Gastrocnemius medialis (tissue), 4 donors: ENCODE measurements at regions of chr3 and their contacts with region 1.

Region 1: GRCh38 chr3:128123538-128124368 is at the start of gene RUVBL1:
- DNase-seq: peak; percentile 95 to 97
- ATAC-seq: peak; percentile 99 to 100
- H3K4me3 ChIP-seq: peak within 1 kb of the TSS; percentile 87 to 99 (median 93)
- H3K27ac ChIP-seq: peak within 1 kb of the TSS; percentile 67 to 83 (median 76)
- H3K4me1 ChIP-seq: peaks cover 11 to 14% of the 10 kb centered on the region in 2 donors
- H3K27me3 ChIP-seq: no peaks in the 10 kb centered on the region
- CTCF ChIP-seq: no peak
- POLR2A ChIP-seq: peak; percentile 39 to 48
- total RNA-seq, gene RUVBL1: 12.1 to 26.3 (median 21.4) TPM

Region 2: DNA sequence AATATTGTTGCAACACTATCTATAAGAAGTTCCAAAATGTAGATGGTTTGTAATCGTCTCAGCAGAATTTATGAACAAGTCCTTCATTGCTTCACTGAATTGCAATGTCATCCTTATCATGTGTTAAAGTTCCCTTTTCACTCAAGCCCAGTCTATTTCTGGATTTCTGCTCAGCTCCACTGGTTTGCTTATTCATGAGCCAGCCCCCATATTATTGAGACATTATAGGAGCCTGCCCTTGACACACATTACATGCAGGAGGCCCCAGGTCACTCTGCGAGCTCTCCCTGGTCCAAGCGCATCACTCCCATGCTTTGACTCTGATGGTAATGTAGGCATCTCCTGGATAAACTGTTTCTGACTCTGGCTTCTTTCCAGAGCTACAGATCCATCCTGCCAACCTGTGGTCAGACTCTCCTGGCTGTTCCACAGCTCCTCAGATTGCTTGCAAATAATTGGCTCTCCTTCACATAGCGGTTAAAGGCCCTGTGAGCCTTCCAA is 394.1 kb before region 1 on chr3:
- in situ Hi-C with region 1: no loop called
- intact Hi-C with region 1: no loop called
- DNase-seq: no peak
- ATAC-seq: peak; percentile 74 to 77
- H3K4me3 ChIP-seq: no peak overlapping the region
- H3K27ac ChIP-seq: peak overlapping the region in 3 of 4 donors; percentile 52 to 78 (median 61)
- H3K4me1 ChIP-seq: peaks cover 13 to 47% of the 10 kb centered on the region in 2 donors
- H3K27me3 ChIP-seq: no peaks in the 10 kb centered on the region
- CTCF ChIP-seq: no peak
- POLR2A ChIP-seq: no peak

Region 3: DNA sequence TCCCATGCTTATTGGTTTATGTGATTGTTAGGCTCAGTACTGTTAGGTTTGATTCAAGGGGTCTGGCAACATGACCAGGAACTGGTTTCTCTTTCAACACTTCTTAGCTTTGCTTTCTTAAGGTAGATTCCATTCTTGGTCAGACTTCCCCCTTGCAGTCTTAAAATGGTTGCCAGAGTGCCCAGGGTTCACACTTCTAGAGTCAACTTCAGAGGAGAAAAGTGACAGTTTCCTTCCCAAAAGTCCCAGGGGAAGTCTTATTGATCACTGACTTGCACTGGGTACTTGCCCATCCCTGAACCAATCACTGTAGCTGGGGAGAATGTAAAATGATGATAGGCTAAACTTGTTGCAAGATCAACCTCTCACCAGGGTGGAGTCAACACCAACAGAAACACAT is 315.6 kb before region 1 on chr3:
- in situ Hi-C with region 1: no loop called
- intact Hi-C with region 1: no loop called
- DNase-seq: no peak
- ATAC-seq: no peak
- H3K4me3 ChIP-seq: no peak overlapping the region
- H3K27ac ChIP-seq: no peak overlapping the region
- H3K4me1 ChIP-seq: peaks cover 36 to 37% of the 10 kb centered on the region in 2 donors
- H3K27me3 ChIP-seq: no peaks in the 10 kb centered on the region
- CTCF ChIP-seq: no peak
- POLR2A ChIP-seq: no peak

Region 4: DNA sequence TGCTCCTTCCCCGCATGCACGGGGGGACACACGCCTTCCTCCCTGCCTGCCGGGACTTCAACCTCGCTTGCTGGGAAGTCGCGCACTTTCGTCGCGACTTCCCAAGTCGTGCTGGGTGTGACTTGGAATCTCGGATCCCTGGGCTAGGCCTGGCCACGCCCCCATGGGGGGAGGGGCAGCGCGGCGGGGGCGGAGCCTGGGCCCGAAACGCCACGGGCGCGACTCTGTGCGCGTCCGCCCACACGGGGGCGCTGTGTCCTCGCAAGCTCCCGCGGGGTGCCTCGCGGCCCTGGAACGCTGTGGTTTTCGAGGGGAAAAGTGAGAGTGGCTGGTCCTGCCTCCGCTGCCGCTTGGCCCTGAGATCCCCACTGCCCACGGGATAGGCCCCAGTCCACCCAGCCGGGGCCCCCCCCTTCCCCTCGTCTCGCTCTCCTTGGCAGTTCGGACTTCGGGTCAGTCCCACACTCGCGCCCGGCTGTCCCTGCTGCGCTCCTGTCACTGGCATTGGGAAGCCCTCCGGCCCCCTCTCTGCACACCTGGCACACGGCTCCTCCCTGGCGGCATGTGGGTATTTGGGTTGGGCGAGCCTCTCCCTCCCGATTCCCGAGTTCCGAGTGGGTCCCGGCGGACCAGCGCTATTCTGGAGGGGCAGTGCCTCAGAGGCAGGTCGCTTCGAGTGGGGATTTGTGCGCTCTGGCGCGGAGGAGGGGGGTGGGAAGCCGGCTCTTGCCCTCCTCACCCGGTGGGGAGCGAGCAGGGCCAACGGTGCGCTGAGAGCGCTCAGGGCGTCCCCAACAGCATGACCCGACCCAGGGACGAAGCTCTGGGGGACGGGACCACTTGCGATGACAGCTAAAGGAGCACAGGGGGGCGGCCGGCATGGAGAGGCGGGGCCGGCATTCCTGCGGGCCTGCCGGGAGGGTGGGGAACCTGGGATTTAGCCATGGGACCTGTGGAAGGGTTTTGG is 48.0 kb before region 1 on chr3:
- in situ Hi-C with region 1: no loop called
- intact Hi-C with region 1: loop called (anchors 5 kb)
- DNase-seq: peak; percentile 61 to 75
- ATAC-seq: peak; percentile 80 to 86
- H3K4me3 ChIP-seq: peak overlapping the region; percentile 58 to 79 (median 60)
- H3K27ac ChIP-seq: peak overlapping the region; percentile 45 to 60 (median 50)
- H3K4me1 ChIP-seq: peaks cover 14 to 28% of the 10 kb centered on the region in 2 donors
- H3K27me3 ChIP-seq: no peaks in the 10 kb centered on the region
- CTCF ChIP-seq: peak; percentile 89 to 97 (median 92)
- POLR2A ChIP-seq: peak in 1 of 2 donors; percentile 14

Region 5: GRCh38 chr3:128153156-128154041 is 29.6 kb after region 1 on chr3 and contains the start of gene EEFSEC:
- in situ Hi-C with region 1: no loop called
- intact Hi-C with region 1: loop called (anchors 1 kb)
- DNase-seq: peak; percentile 63 to 68
- ATAC-seq: peak; percentile 91 to 96
- H3K4me3 ChIP-seq: peak within 1 kb of the TSS; percentile 74 to 91 (median 84)
- H3K27ac ChIP-seq: peak within 1 kb of the TSS; percentile 81 to 90 (median 88)
- H3K4me1 ChIP-seq: peaks cover 18 to 25% of the 10 kb centered on the region in 2 donors
- H3K27me3 ChIP-seq: no peaks in the 10 kb centered on the region
- CTCF ChIP-seq: no peak
- POLR2A ChIP-seq: peak; percentile 65 to 75
- total RNA-seq, gene EEFSEC: 21.0 to 29.4 (median 23.4) TPM